ENCODE measurements at regions of chr20 and their contacts with region 1.

Region 1: GRCh38 chr20:57391074-57391554 is at the start of gene RBM38:
- DNase-seq: peak; percentile 77
- ATAC-seq: peak; percentile 69
- H3K4me3 Mint-ChIP-seq: peak within 1 kb of the TSS; percentile 92
- H3K27ac Mint-ChIP-seq: peak within 1 kb of the TSS; percentile 96
- H3K4me1 Mint-ChIP-seq: peaks cover 63% of the 10 kb centered on the region
- H3K27me3 Mint-ChIP-seq: no peaks in the 10 kb centered on the region
- CTCF ChIP-seq: no peak
- total RNA-seq, gene RBM38: 69.6 and 70.7 TPM in 2 replicates

Region 2: DNA sequence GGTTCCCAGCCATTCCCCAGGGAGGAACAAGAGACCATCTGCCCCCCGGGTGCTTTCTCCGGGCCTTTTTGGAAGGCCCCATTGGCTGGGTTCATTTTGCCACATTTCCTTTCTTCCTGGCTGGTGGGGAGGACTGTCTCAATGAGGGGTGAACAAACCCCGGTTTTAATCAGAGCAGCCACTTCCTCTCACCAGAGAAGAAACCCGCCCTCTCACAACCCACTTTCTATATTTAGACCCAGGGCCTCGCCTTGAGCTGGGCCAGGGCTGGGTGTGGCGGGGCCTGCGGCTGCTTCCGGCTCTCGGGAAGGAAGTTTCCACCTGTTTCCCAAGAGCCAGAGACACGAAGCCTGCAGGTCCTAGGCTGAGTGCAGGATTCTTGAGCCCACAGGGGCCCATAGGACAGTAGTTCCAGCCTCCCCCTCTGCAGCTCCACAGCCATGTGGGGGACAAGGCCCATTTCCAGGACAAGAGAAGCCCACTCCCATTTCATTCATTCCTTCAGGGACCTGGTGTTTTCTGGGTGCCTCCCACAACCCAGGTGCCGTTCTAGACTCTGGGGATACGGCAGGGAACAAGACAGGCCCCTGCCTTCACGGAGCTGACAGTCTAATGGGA is 41.9 kb after region 1 on chr20:
- CTCF ChIA-PET with region 1: interaction called, 23 read pairs
- POLR2A ChIA-PET with region 1: interaction called, 112 read pairs
- intact Hi-C with region 1: loop called (anchors 1 kb)
- DNase-seq: peak; percentile 53
- ATAC-seq: peak; percentile 75
- H3K4me3 Mint-ChIP-seq: peak overlapping the region; percentile 59
- H3K27ac Mint-ChIP-seq: peak overlapping the region; percentile 84
- H3K4me1 Mint-ChIP-seq: peaks cover 79% of the 10 kb centered on the region
- H3K27me3 Mint-ChIP-seq: no peaks in the 10 kb centered on the region
- CTCF ChIP-seq: no peak

Region 3: GRCh38 chr20:57480444-57481160 is 89.5 kb after region 1 on chr20:
- CTCF ChIA-PET with region 1: interaction called, 13 read pairs
- POLR2A ChIA-PET with region 1: interaction called, 86 read pairs
- intact Hi-C with region 1: loop called (anchors 1 kb)
- DNase-seq: peak; percentile 64
- ATAC-seq: peak; percentile 69
- H3K4me3 Mint-ChIP-seq: peak overlapping the region; percentile 73
- H3K27ac Mint-ChIP-seq: peak overlapping the region; percentile 81
- H3K4me1 Mint-ChIP-seq: peaks cover 82% of the 10 kb centered on the region
- H3K27me3 Mint-ChIP-seq: no peaks in the 10 kb centered on the region
- CTCF ChIP-seq: no peak

Region 4: GRCh38 chr20:57560554-57561355 is 169.6 kb after region 1 on chr20 and contains the start of gene PCK1:
- CTCF ChIA-PET with region 1: no interaction called
- POLR2A ChIA-PET with region 1: no interaction called
- intact Hi-C with region 1: no loop called
- DNase-seq: no peak
- ATAC-seq: no peak
- H3K4me3 Mint-ChIP-seq: no peak within 1 kb of the TSS
- H3K27ac Mint-ChIP-seq: no peak within 1 kb of the TSS
- H3K4me1 Mint-ChIP-seq: no peaks in the 10 kb centered on the region
- H3K27me3 Mint-ChIP-seq: peaks cover 34% of the 10 kb centered on the region
- CTCF ChIP-seq: no peak
- total RNA-seq, gene PCK1: not detected in 2 replicates

Region 5: DNA sequence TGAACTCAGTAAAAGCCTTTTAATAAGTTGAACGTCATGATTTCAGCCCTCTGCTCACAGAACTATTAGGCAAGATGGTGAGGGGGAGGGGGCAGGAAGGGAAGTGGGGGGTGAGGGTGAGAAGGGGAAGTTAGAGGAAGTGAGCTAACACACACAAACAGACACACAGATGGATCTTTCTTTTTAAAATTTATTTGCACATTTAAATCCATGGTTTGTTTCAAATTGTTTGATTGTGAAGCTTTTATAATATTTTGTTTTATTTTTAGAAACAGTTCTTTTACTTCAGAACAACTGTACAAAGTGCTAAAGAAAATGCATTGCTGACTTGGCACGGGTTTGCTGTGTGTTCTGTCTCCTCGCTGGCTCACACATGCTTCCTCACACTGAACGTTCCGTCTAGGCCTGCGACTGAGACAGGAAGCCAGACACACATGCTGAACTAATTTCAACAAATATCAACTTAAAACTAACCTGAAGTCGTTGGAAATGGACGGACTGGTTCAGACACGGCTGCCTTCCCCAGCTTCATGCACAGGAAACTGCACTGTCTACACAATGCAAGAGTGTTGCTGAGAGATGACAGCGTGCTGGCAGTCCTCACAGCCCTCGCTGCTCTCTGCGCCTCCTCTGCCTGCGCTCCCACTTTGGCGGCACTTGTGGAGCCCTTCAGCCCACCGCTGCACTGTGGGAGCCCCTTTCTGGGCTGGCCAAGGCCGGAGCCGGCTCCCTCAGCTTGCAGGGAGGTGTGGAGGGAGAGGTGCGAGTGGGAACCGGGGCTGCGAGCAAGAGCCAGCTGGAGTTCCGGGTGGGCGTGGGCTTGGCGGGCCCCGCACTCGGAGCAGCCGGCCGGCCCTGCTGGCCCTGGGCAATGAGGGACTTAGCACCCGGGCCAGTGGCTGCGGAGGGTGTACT is 237.2 kb after region 1 on chr20:
- CTCF ChIA-PET with region 1: no interaction called
- POLR2A ChIA-PET with region 1: interaction called, 21 read pairs
- intact Hi-C with region 1: no loop called
- DNase-seq: no peak
- ATAC-seq: peak; percentile 81
- H3K4me3 Mint-ChIP-seq: peak overlapping the region; percentile 81
- H3K27ac Mint-ChIP-seq: peak overlapping the region; percentile 98
- H3K4me1 Mint-ChIP-seq: peaks cover 39% of the 10 kb centered on the region
- H3K27me3 Mint-ChIP-seq: peaks cover 12% of the 10 kb centered on the region
- CTCF ChIP-seq: no peak

Region 6: DNA sequence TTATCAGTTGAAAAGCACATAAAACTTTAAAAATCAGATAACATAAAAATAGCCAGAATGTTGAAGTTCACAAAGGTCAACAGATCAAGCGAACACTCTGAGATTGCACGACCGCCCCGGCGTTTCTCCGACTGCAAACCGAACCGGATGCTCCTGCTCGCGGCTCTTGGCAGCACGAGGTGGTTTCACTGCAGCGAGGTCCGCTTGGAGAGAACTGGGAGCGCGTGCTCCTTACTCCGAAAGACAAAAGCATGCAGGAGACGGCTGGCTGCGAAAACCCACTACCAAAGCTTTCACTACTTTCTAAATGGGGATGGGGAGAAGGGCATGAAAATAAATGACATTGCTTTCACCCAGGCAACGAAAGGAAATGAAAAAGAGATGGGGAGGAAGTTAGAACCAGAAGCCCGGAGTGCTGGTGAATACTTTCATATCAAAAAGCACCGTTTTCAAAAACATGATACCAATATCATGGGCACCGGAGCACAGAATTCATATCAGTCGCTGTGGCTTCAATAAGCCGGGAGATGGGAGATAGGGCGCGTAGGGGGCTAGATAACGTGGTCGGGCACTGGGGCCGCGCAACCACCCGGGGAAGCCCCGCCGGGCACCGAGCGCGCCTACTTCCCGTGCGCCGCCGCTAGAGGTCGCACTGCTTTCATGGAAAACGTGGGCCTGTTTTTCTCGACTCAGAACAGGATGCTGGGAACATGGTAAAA is 845.7 kb after region 1 on chr20:
- CTCF ChIA-PET with region 1: no interaction called
- POLR2A ChIA-PET with region 1: no interaction called
- intact Hi-C with region 1: loop called (anchors 5 kb)
- DNase-seq: peak; percentile 75
- ATAC-seq: peak; percentile 92
- H3K4me3 Mint-ChIP-seq: peak overlapping the region; percentile 93
- H3K27ac Mint-ChIP-seq: peak overlapping the region; percentile 87
- H3K4me1 Mint-ChIP-seq: peaks cover 7% of the 10 kb centered on the region
- H3K27me3 Mint-ChIP-seq: no peaks in the 10 kb centered on the region
- CTCF ChIP-seq: no peak

Region 7: GRCh38 chr20:59006864-59007664 is 1616.0 kb after region 1 on chr20 and contains the start of gene CTSZ:
- CTCF ChIA-PET with region 1: no interaction called
- POLR2A ChIA-PET with region 1: interaction called, 5 read pairs
- intact Hi-C with region 1: loop called (anchors 2 kb)
- DNase-seq: peak; percentile 65
- ATAC-seq: peak; percentile 25
- H3K4me3 Mint-ChIP-seq: peak within 1 kb of the TSS; percentile 95
- H3K27ac Mint-ChIP-seq: peak within 1 kb of the TSS; percentile 99
- H3K4me1 Mint-ChIP-seq: peaks cover 61% of the 10 kb centered on the region
- H3K27me3 Mint-ChIP-seq: no peaks in the 10 kb centered on the region
- CTCF ChIP-seq: no peak
- total RNA-seq, gene CTSZ: 262 and 278 TPM in 2 replicates